Right ventricle myocardium inferior (tissue), 1 donor: ENCODE measurements at regions of chr12 and their contacts with region 1.

Region 1: GRCh38 chr12:9707864-9708808 is 24.8 kb downstream of the CLECL1 start:
- DNase-seq: no peak
- ATAC-seq: no peak

Region 2: DNA sequence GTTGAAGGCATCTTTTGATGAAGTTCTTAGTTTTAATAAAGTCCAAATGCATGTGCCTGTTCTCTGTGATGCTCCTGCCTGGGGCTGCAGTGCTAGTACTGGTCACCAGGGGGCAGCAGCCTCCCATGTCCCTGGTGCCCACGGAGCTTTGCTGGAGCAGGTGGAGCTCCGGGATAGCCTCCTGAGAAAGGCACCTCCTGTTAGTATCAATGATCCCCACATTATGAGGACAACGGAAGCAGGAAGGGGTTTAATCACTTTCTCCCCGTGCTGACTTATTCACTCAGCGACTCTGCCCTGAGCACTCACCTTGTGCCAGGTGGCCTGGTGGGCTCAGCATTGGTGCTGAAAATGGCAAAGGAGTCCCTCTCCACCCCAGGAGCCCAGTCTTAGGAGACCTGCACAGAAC is 376.9 kb before region 1 on chr12:
- intact Hi-C with region 1: loop called (anchors 10 kb)
- DNase-seq: peak; percentile 81
- ATAC-seq: peak; percentile 63

Region 3: DNA sequence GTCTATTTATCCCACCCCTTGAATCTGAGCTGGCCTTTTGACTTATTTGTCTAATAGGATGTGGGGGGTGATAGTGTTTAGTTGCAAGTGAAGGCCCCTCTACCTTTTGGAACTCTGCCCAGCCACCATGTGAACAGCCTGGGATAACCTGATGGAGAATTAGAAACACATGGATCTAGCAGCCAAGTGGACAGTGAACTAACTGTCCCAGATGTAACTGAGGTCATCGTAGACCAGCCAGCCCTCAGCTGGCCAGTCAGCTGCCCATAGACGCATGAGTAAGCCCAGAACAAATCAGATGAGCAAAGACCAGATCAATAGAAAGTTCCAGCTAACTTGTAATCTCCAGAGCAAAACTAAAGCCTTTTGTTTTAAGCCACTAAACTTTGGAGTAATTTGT is 119.4 kb before region 1 on chr12:
- intact Hi-C with region 1: no loop called
- DNase-seq: no peak
- ATAC-seq: no peak

Region 4: DNA sequence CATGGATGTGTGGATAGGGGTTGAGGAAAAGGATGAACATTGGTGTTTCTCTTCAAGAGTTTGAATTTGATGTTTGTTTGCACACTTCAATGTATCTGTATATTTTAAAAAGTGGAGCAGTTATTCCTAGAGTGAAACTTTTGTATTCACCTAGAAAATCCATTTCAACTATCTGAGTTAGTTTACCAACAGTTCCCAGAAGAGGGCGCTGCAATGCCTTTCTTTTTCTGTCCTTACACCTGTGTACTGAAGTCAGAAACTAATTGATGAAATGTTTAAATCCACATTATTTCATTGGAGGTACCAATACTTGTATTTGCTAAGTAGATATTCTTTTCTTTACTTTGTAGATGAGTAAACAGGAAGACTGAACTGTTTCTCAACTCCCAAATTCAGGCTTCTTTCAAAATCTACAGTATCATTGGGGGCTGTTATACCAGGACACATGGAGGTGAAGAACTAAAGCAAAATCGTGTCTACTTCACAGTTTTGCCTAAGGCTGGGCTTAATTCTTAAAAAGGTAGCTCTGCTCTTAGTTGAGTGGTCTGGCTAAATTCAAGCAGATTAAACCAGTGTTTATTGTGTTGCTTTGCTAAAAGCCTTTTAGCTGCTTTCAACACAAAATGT is 73.8 kb before region 1 on chr12:
- intact Hi-C with region 1: loop called (anchors 1 kb)
- DNase-seq: no peak
- ATAC-seq: no peak

Region 5: DNA sequence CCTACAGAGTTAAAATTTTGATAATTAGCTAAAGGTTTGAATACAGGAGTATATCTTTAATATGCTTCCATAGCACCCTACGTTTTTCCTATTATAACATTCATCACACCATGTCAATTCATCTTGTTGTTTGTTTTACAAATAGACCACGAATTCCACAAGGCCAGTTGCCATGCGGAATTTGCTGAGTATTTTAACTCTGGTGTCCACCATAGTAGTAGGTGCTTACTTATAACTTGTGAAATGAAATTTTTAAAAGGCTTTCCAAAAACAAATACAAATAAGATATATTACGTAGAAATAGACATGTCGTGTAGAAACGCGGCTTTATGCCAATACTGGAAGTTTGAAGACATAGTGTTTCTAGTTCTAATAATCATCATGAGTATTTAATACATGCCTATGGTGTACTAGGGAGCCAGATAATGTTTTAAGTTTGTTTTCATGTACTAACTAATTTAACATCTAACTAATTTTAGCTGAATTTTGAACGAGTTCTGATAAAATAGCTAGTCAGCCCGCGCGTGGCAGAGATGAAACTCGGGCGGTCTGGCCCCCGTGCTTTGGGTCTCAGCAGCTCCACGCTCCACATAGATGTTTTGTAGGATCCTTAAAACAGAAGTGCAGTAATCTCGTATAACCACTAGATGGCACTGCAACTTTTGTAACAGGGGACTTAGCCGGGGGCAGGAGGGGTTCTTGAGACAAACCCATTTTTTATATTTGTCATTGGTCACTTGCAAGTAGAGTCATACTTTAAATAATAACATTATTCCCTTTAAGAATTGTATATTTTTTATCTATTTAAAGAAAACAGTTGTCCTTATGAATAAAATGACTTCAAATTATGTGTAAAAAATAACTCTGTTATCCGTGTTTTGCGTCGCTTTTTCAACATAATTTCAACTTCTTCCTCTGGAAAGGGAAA is 42.4 kb after region 1 on chr12:
- intact Hi-C with region 1: no loop called
- DNase-seq: peak; percentile 53
- ATAC-seq: peak; percentile 84

Region 6: GRCh38 chr12:9773216-9773877 is 65.2 kb after region 1 on chr12:
- intact Hi-C with region 1: no loop called
- DNase-seq: no peak
- ATAC-seq: no peak

Region 7: DNA sequence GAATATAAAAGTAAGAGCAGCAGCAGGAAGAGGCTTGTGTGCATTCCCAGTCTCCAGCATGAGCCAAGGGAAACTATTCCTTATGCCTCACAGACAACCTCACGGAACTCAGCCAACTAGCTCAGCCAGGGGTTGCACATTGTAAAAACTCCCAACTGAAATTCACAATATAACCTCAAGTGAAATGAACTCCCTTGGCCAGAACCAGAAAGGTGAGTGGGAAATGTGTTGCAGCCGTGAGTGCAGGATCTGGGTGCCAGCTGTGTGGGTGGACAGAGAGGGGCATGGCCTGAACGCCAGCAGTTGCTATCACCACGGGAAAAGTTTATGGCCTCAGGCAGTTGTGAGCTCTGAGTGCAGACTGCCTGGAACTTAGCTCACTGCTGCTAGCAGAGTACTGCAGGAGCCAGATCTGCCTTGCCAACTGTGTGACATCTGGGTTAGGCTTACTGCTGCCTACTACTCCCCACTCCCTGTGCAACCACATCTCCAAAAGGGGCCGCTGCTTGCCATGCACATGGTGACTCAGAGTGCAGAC is 393.0 kb after region 1 on chr12:
- intact Hi-C with region 1: no loop called
- DNase-seq: no peak
- ATAC-seq: peak; percentile 74